H1 (cell line): ENCODE measurements at regions of chr6 and their contacts with region 1.

Region 1: GRCh38 chr6:43667245-43668150 is 20.1 kb downstream of the MRPS18A start:
- DNase-seq: peak; percentile 68 to 97
- H3K4me3 ChIP-seq: peak overlapping the region in 3 of 4 experiments; percentile 11 to 48 (median 23); a peak in 4 of 8 replicates
- H3K27ac ChIP-seq: no peak overlapping the region
- H3K4me1 ChIP-seq: peaks cover 5 to 27% (median 22%) of the 10 kb centered on the region in 4 experiments
- H3K27me3 ChIP-seq: no peaks in the 10 kb centered on the region; a peak in 2 of 7 replicates
- CTCF ChIP-seq: peak in 2 of 3 experiments; percentile 94 to 99; a peak in 3 of 4 replicates
- EP300 ChIP-seq: no peak
- POLR2A ChIP-seq: no peak
- RAD21 ChIP-seq: peak; percentile 94 to 95

Region 2: GRCh38 chr6:43644931-43645612 is 22.4 kb before region 1 on chr6 and contains the start of gene RSPH9:
- CTCF ChIA-PET with region 1: interaction called, 35 read pairs
- POLR2A ChIA-PET with region 1: interaction called, 33 read pairs
- DNase-seq: peak; percentile 92 to 96
- H3K4me3 ChIP-seq: peak within 1 kb of the TSS; percentile 49 to 71 (median 66)
- H3K27ac ChIP-seq: no peak within 1 kb of the TSS
- H3K4me1 ChIP-seq: no peaks in the 10 kb centered on the region; a peak in 1 of 7 replicates
- H3K27me3 ChIP-seq: no peaks in the 10 kb centered on the region
- CTCF ChIP-seq: no peak
- EP300 ChIP-seq: no peak
- POLR2A ChIP-seq: no peak
- RAD21 ChIP-seq: no peak
- total RNA-seq, gene RSPH9: 0.15 TPM in 1 of 2 replicates, not detected in the other

Region 3: GRCh38 chr6:43687437-43688347 is 20.2 kb after region 1 on chr6 and contains the start of gene MRPS18A:
- CTCF ChIA-PET with region 1: interaction called, 7 read pairs
- POLR2A ChIA-PET with region 1: interaction called, 85 read pairs
- DNase-seq: peak in 1 of 2 experiments; percentile 87
- H3K4me3 ChIP-seq: peak within 1 kb of the TSS; percentile 94 to 99 (median 97)
- H3K27ac ChIP-seq: peak within 1 kb of the TSS; percentile 68
- H3K4me1 ChIP-seq: peaks cover 0 to 15% (median 3%) of the 10 kb centered on the region in 4 experiments; a peak in 5 of 7 replicates
- H3K27me3 ChIP-seq: no peaks in the 10 kb centered on the region
- CTCF ChIP-seq: no peak
- EP300 ChIP-seq: no peak
- POLR2A ChIP-seq: peak in 1 of 2 experiments; percentile 91; a peak in 2 of 3 replicates
- RAD21 ChIP-seq: no peak; a peak in 1 of 4 replicates
- total RNA-seq, gene MRPS18A: 48.3 and 52.1 TPM in 2 replicates

Region 4: GRCh38 chr6:43723737-43724295 is 56.3 kb after region 1 on chr6:
- CTCF ChIA-PET with region 1: interaction called, 15 read pairs
- POLR2A ChIA-PET with region 1: interaction called, 4 read pairs
- DNase-seq: peak; percentile 49 to 85
- H3K4me3 ChIP-seq: no peak overlapping the region
- H3K27ac ChIP-seq: no peak overlapping the region
- H3K4me1 ChIP-seq: peaks cover 0 to 8% (median 0%) of the 10 kb centered on the region in 4 experiments; a peak in 4 of 7 replicates
- H3K27me3 ChIP-seq: no peaks in the 10 kb centered on the region
- CTCF ChIP-seq: peak; percentile 77 to 82 (median 81)
- EP300 ChIP-seq: no peak
- POLR2A ChIP-seq: no peak
- RAD21 ChIP-seq: peak; percentile 89

Region 5: GRCh38 chr6:43758617-43759050 is 91.1 kb after region 1 on chr6:
- CTCF ChIA-PET with region 1: interaction called, 146 read pairs
- POLR2A ChIA-PET with region 1: interaction called, 8 read pairs
- DNase-seq: peak in 1 of 2 experiments; percentile 91
- H3K4me3 ChIP-seq: no peak overlapping the region
- H3K27ac ChIP-seq: no peak overlapping the region
- H3K4me1 ChIP-seq: peaks cover 0 to 9% (median 5%) of the 10 kb centered on the region in 4 experiments; a peak in 5 of 7 replicates
- H3K27me3 ChIP-seq: no peaks in the 10 kb centered on the region
- CTCF ChIP-seq: peak; percentile 87 to 95 (median 94)
- EP300 ChIP-seq: no peak
- POLR2A ChIP-seq: no peak
- RAD21 ChIP-seq: peak; percentile 81 to 88